ENCODE measurements at regions of chr1 and their contacts with region 1.

Region 1: GRCh38 chr1:39183503-39184353 is 20.8 kb upstream of the MACF1 start:
- DNase-seq: peak; percentile 94
- H3K4me3 Mint-ChIP-seq: peak overlapping the region; percentile 31
- H3K27ac Mint-ChIP-seq: peak overlapping the region; percentile 93
- H3K4me1 Mint-ChIP-seq: peaks cover 50% of the 10 kb centered on the region
- H3K27me3 Mint-ChIP-seq: no peaks in the 10 kb centered on the region

Region 2: DNA sequence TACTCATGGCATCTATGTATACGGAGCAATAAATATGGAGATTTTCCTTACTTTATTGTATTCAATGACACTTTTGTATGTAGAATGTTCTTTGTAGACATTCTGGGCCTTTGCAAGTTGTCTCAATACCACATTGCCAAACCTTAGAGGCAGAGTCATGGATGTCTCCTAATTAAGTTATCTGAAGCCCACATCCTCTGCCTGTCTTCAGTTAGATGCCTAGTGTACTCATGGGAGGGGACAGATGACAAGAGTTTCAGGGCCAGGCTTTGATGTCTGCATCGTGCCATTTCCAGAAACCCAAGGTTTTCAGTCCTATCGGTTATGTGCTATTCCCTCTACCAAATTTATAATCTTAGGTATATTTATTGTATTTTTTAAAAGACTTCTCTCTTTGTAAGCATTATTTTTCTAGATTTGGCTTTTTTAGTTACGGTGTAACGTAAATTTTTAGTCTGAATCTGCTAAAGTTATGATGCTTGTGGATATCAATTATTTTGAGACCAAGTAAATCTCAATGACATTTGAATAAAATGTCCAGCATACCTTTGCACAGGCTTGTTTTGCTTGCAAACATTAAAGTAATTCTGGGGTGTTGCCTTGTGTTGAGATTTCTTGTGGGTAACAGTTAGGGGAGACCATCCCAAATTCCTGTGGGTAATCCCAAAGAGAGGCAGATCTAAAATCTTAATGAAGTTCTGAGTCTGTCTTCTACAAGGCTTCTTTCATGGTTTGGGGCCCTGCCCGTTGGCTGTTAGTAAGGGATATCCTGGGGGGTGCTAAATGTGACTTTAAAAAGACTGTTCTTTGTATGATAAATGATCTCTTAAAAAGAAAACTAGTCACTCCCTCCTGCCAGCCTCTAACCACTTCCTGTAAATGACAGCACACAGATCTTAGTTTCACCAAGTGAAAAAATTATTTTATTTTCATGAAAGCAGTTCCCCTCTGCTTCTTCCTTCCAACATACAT is 12.8 kb after region 1 on chr1:
- CTCF ChIA-PET with region 1: interaction called, 54 read pairs
- intact Hi-C with region 1: loop called (anchors 1 kb)
- DNase-seq: peak; percentile 81
- H3K4me3 Mint-ChIP-seq: peak overlapping the region; percentile 53
- H3K27ac Mint-ChIP-seq: peak overlapping the region; percentile 97
- H3K4me1 Mint-ChIP-seq: peaks cover 81% of the 10 kb centered on the region
- H3K27me3 Mint-ChIP-seq: no peaks in the 10 kb centered on the region

Region 3: DNA sequence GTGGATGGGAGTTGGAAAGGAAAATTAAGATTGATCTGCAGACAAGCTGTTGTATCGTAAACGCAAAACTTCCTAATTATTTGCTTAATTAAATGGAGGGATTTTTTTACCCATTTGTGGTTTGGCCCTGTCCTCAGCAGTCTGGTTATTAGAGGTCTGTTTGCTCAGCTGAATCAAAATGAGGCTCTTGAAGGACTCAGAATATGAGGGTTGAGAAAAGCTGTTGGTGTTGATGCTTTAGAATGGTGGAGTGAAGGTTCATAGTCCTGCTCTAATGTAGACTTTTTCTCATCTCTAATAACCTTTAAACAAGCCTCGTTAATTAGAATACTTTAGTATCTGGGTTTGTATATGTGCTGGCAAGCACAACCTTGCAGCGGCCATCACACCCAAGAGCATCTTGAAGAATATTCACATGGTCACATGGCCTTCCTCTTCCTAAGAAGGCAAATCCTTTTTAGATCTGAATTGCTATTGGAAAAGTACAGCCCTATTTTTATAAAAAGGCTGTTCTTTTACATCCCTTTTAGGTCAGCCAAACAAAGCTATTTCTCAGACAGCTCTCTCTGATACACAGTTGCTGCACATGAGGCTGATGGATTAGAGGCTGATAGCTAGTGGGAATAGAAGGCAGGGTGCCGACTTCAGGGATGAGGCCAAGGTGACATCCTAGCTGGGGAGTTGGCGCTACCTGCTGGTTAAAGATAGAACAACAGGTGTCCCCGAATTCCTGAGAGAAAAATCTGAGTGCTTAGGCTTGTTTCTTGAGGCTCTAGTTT is 74.6 kb after region 1 on chr1:
- CTCF ChIA-PET with region 1: interaction called, 53 read pairs
- intact Hi-C with region 1: loop called (anchors 1 kb)
- DNase-seq: peak; percentile 80
- H3K4me3 Mint-ChIP-seq: no peak overlapping the region
- H3K27ac Mint-ChIP-seq: peak overlapping the region; percentile 50
- H3K4me1 Mint-ChIP-seq: peaks cover 33% of the 10 kb centered on the region
- H3K27me3 Mint-ChIP-seq: no peaks in the 10 kb centered on the region

Region 4: DNA sequence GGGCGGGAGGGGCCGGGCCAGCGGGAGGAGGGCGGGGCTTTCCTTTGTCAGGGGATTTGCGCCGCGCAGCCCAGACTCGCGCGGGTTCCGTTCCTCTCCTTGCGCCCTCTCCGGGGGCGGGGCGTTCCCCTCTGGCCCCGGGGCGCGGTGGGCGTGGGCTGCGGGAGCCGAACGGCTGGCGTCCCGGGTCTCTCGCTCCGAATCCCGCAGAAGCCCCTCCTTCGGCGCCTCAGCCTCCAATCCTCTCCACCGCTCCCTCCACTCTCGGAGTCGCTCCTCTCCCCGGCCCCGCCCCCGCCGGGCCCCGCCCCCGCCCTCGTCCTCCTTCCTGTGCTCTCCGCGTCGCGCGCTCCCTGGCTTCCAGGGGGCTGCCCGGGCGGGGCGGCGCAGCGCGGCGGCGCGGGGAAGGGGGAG is 224.9 kb after region 1 on chr1:
- CTCF ChIA-PET with region 1: interaction called, 10 read pairs
- intact Hi-C with region 1: no loop called
- DNase-seq: peak; percentile 82
- H3K4me3 Mint-ChIP-seq: peak overlapping the region; percentile 81
- H3K27ac Mint-ChIP-seq: no peak overlapping the region
- H3K4me1 Mint-ChIP-seq: peaks cover 60% of the 10 kb centered on the region
- H3K27me3 Mint-ChIP-seq: no peaks in the 10 kb centered on the region

Region 5: GRCh38 chr1:39666772-39667171 is 483.0 kb after region 1 on chr1:
- CTCF ChIA-PET with region 1: no interaction called
- intact Hi-C with region 1: loop called (anchors 2 kb)
- DNase-seq: peak; percentile 77
- H3K4me3 Mint-ChIP-seq: no peak overlapping the region
- H3K27ac Mint-ChIP-seq: peak overlapping the region; percentile 42
- H3K4me1 Mint-ChIP-seq: peaks cover 23% of the 10 kb centered on the region
- H3K27me3 Mint-ChIP-seq: peaks cover 32% of the 10 kb centered on the region

Measured in activated naive CD4-positive, alpha-beta T cell treated with anti-CD3 and anti-CD28 coated beads for 36 hours (primary cell).